ENCODE measurements at regions of chr6 and their contacts with region 1.

Region 1: GRCh38 chr6:168355716-168356449 is 36.3 kb upstream of the DACT2 start:
- DNase-seq: peak in 1 of 2 donors; percentile 84
- ATAC-seq: peak; percentile 80
- H3K4me3 ChIP-seq: no peak overlapping the region
- H3K27ac ChIP-seq: no peak overlapping the region
- H3K4me1 ChIP-seq: no peaks in the 10 kb centered on the region
- H3K27me3 ChIP-seq: no peaks in the 10 kb centered on the region

Region 2: DNA sequence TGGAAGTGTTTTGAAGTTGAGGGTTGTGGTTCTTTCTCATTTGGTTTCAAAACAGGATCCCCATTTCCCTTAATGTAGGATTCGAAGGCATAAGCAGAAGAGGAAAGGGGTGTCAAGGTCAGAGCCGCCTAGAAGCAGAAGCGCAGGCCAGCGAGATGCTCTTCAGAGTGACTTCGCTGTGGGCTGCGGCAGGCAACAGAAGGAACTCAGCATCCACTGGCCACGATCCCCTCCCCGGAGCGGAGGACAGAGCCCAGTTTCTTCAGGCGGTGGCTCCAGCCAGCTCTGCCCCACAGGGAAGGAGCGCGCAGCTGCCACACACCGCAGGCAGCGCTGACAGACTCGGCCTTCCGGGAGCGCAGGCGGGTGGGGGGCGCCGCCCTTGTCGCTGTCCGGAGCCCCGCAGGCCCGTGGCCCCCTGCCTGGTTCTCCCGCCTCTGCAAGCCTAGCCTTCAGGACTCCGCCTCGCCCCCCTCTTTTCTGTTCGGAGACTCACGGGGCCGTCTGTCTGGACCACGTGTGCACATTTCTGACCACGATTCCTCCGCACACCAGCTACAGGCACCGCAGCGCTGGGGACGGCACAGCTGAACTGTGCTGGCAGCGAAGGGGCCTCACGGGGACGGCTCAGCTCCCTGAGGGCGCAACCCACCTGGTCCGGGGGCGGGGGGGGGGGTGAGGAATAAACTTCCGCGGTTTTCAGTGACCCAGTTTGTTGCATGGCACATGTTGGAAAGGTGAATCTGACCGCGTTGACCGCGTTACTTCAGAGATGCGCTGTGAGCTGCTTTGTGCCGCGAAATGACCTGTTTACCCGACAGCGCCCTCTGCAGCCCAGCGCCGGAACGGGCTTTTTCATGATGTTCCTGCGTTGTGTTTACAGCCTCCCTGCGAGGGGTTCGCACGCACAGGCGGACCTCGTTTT is 1004.9 kb before region 1 on chr6:
- intact Hi-C with region 1: no loop called
- DNase-seq: peak; percentile 59 to 87
- ATAC-seq: peak; percentile 71
- H3K4me3 ChIP-seq: peak overlapping the region in 1 of 2 donors; percentile 16
- H3K27ac ChIP-seq: no peak overlapping the region
- H3K4me1 ChIP-seq: no peaks in the 10 kb centered on the region
- H3K27me3 ChIP-seq: no peaks in the 10 kb centered on the region

Region 3: GRCh38 chr6:168060521-168060931 is 295.4 kb before region 1 on chr6:
- intact Hi-C with region 1: loop called in 1 of 2 experiments (anchors 5 kb)
- DNase-seq: peak in 1 of 2 donors; percentile 72
- ATAC-seq: no peak
- H3K4me3 ChIP-seq: no peak overlapping the region
- H3K27ac ChIP-seq: no peak overlapping the region
- H3K4me1 ChIP-seq: no peaks in the 10 kb centered on the region
- H3K27me3 ChIP-seq: no peaks in the 10 kb centered on the region